ENCODE measurements at regions of chrX and their contacts with region 1.

Region 1: GRCh38 chrX:119235872-119236622 is at the start of gene PGRMC1:
- DNase-seq: peak; percentile 73 to 87
- H3K4me3 ChIP-seq: peak within 1 kb of the TSS; percentile 94
- H3K27ac ChIP-seq: peak within 1 kb of the TSS; percentile 33
- H3K4me1 ChIP-seq: peaks cover 35% of the 10 kb centered on the region
- H3K27me3 ChIP-seq: no peaks in the 10 kb centered on the region
- CTCF ChIP-seq: no peak
- total RNA-seq, gene PGRMC1: 133 and 204 TPM in 2 replicates

Region 2: GRCh38 chrX:119155416-119156035 is 80.5 kb before region 1 on chrX:
- CTCF ChIA-PET with region 1: no interaction called
- POLR2A ChIA-PET with region 1: no interaction called
- intact Hi-C with region 1: loop called (anchors 1 kb)
- DNase-seq: peak; percentile 27 to 56
- H3K4me3 ChIP-seq: no peak overlapping the region
- H3K27ac ChIP-seq: no peak overlapping the region
- H3K4me1 ChIP-seq: peaks cover 12% of the 10 kb centered on the region
- H3K27me3 ChIP-seq: no peaks in the 10 kb centered on the region
- CTCF ChIP-seq: no peak

Region 3: GRCh38 chrX:119292445-119292844 is 56.4 kb after region 1 on chrX:
- CTCF ChIA-PET with region 1: no interaction called
- POLR2A ChIA-PET with region 1: no interaction called
- intact Hi-C with region 1: no loop called
- DNase-seq: no peak
- H3K4me3 ChIP-seq: no peak overlapping the region
- H3K27ac ChIP-seq: no peak overlapping the region
- H3K4me1 ChIP-seq: no peaks in the 10 kb centered on the region
- H3K27me3 ChIP-seq: no peaks in the 10 kb centered on the region
- CTCF ChIP-seq: peak; percentile 56

Region 4: GRCh38 chrX:119502727-119503483 is 266.9 kb after region 1 on chrX:
- CTCF ChIA-PET with region 1: no interaction called
- POLR2A ChIA-PET with region 1: no interaction called
- intact Hi-C with region 1: loop called (anchors 5 kb)
- DNase-seq: peak; percentile 78 to 86
- H3K4me3 ChIP-seq: peak overlapping the region; percentile 43; the same call in 1 of the 2 replicates
- H3K27ac ChIP-seq: peak overlapping the region; percentile 95
- H3K4me1 ChIP-seq: peaks cover 49% of the 10 kb centered on the region
- H3K27me3 ChIP-seq: no peaks in the 10 kb centered on the region
- CTCF ChIP-seq: no peak; the same call in 1 of the 2 replicates

Measured in PC-9 (cell line).